Tibial artery (tissue), 4 donors: ENCODE measurements at regions of chr2 and their contacts with region 1.

Region 1: DNA sequence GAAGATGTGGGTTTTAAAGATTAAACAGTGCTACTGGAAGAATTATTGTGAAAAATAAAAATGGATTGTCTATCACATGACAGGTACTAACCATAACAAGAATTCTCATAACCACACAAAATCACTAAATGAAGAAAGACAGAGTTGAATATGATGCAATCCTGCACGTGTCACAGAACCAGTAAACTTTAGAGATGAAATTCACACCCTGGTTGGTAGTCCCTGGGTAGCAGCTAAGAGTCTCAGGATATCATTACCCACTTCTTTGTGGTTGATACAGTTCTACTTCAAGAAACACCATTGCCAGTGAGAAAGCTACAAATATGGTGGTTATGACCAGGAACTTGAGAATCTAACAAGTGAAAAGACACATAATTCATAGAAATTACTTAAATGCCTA is 450.2 kb downstream of the ERBB4 start:
- DNase-seq: no peak
- H3K4me3 ChIP-seq: no peak overlapping the region
- H3K27ac ChIP-seq: no peak overlapping the region
- H3K4me1 ChIP-seq: no peaks in the 10 kb centered on the region
- H3K27me3 ChIP-seq: no peaks in the 10 kb centered on the region
- CTCF ChIP-seq: no peak

Region 2: GRCh38 chr2:212034841-212035585 is 53.3 kb before region 1 on chr2:
- intact Hi-C with region 1: loop called (anchors 2 kb)
- DNase-seq: no peak
- H3K4me3 ChIP-seq: no peak overlapping the region
- H3K27ac ChIP-seq: no peak overlapping the region
- H3K4me1 ChIP-seq: peaks cover 0 to 21% (median 6%) of the 10 kb centered on the region in 4 donors
- H3K27me3 ChIP-seq: no peaks in the 10 kb centered on the region
- CTCF ChIP-seq: no peak